Left lung (tissue), 14 donors: ENCODE measurements at regions of chr5 and their contacts with region 1.

Region 1: GRCh38 chr5:53478411-53479044 is 1.9 kb upstream of the FST start:
- DNase-seq: peak in 3 of 4 donors; percentile 42 to 81 (median 64)
- ATAC-seq: peak; percentile 31
- H3K4me3 ChIP-seq: peak overlapping the region; percentile 21 to 65
- H3K27ac ChIP-seq: no peak overlapping the region
- H3K4me1 ChIP-seq: peaks cover 3 to 44% of the 10 kb centered on the region in 2 donors
- H3K27me3 ChIP-seq: peaks cover 0 to 61% of the 10 kb centered on the region in 2 donors
- CTCF ChIP-seq: peak; percentile 32 to 37

Region 2: DNA sequence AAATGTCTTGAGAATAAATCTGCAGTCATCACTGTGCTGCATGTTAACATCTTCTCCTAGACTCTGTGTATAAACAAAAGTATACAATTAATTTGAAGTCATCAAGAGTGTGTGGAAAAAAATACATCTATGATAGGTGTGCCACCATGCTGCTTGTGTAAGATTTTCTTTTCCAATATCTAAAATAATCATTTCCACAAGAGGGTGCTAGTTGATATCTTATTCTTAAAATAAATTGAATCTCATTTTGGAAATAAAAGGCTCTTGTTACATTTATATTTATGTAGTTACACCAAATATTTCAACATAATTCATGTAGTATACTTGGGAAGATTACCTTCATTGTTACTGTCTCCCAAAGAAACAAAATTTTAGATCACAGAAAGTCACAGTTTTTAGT is 354.8 kb before region 1 on chr5:
- intact Hi-C with region 1: no loop called
- DNase-seq: no peak
- ATAC-seq: no peak
- H3K4me3 ChIP-seq: no peak overlapping the region
- H3K27ac ChIP-seq: no peak overlapping the region
- H3K4me1 ChIP-seq: no peaks in the 10 kb centered on the region
- H3K27me3 ChIP-seq: no peaks in the 10 kb centered on the region
- CTCF ChIP-seq: no peak

Region 3: GRCh38 chr5:54229041-54229780 is 750.7 kb after region 1 on chr5:
- intact Hi-C with region 1: loop called in 1 of 2 experiments (anchors 5 kb)
- DNase-seq: peak in 3 of 4 donors; percentile 57 to 82 (median 63)
- ATAC-seq: peak; percentile 94
- H3K4me3 ChIP-seq: no peak overlapping the region
- H3K27ac ChIP-seq: no peak overlapping the region
- H3K4me1 ChIP-seq: peaks cover 0 to 8% of the 10 kb centered on the region in 2 donors
- H3K27me3 ChIP-seq: no peaks in the 10 kb centered on the region
- CTCF ChIP-seq: peak; percentile 88 to 91